Mammary epithelial cell (primary cell): ENCODE measurements at regions of chrX and their contacts with region 1.

Region 1: DNA sequence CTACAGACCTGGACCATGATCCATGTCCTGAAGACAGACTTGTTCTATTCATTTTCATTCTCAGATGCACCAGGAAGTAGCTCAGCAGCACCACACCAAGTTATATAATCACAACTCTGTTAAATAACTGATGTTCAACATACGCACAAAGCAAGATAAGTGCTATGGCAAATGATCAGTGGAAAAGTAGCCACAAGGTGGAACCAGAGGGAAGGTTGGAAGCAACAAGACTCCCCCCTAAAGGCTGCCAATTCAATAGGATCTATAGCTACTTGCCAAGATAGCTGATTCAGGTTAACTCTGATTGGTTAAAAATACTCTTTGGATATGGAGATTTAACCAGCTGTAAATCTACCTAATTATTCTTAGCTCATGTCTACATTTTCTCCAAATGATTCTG is 23.7 kb upstream of the FAM47B start:
- DNase-seq: peak; percentile 39
- H3K4me3 ChIP-seq: no peak overlapping the region
- H3K27ac ChIP-seq: no peak overlapping the region
- H3K4me1 ChIP-seq: peaks cover 12% of the 10 kb centered on the region
- H3K27me3 ChIP-seq: peaks cover 2% of the 10 kb centered on the region
- CTCF ChIP-seq: peak; percentile 48 to 59

Region 2: DNA sequence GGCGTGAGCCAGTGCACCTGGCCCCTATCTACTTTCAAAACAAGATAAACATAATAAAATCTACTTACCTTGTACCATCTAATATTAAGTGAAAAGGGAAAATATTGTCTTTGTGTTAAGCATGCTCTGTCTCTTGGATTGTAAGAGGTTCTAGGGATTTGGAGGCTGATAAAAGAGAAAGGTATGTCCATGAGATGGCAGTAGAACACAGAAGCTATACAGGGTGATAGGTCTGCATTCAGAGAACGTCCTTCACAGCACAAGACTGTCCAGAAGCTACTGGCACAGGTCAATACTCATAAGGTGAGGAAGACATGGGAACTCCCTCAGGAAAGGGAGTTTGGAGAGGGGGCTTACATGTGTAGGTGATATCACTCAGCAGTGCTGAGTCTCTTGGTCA is 397.3 kb before region 1 on chrX:
- CTCF ChIA-PET with region 1: no interaction called
- dilution Hi-C with region 1: no loop called
- in situ Hi-C with region 1: no loop called
- intact Hi-C with region 1: loop called (anchors 10 kb)
- DNase-seq: peak; percentile 21
- H3K4me3 ChIP-seq: no peak overlapping the region
- H3K27ac ChIP-seq: no peak overlapping the region
- H3K4me1 ChIP-seq: no peaks in the 10 kb centered on the region
- H3K27me3 ChIP-seq: no peaks in the 10 kb centered on the region
- CTCF ChIP-seq: peak; percentile 31 to 54

Region 3: DNA sequence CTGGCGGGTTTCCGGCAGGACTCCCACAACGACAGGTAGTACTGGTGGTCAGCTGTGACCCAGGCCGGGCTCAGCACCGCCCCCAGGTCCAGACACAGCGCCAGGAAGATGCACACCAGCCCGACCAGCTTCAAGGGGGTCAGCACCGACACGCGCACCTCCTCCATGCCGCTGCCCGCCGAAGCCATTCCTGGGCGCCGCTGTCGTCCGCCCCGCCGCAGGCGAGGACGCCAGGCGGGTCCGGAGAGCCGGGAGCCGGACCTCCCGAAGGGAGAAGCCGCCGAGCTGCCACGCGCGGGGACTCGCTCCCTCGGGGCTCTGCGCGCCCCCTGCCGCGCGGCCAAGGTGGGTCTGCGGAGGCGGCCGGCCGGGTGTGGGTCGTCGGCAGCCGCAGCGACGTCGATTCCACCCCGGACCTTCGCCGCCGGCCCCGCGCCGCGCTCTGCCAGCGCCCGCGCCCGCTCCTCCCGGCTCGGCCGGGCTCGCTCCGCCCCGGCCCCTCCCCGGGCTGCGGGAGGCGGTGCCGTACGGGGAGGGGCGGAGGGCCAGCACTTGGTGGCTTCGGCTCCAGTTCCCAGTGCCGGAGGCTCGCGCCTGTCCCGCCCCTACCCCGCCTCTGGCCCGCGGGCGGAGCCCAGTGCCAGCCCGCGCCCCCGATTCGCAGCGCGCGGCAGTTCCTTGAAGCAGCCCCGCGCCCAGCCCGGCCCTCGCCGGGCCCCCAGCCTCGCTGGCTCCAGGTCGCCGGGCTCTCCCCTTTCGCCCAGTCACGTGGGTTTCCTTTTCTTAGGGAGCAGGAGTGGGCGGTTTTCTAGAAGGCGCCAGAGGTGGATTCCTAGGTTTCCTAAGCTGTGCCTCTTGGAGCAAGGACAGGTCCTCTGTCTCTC is 261.8 kb before region 1 on chrX and contains the start of gene TMEM47:
- CTCF ChIA-PET with region 1: no interaction called
- dilution Hi-C with region 1: no loop called
- in situ Hi-C with region 1: no loop called
- intact Hi-C with region 1: loop called (anchors 10 kb)
- DNase-seq: peak; percentile 69
- H3K4me3 ChIP-seq: peak within 1 kb of the TSS; percentile 49 to 68 (median 61)
- H3K27ac ChIP-seq: peak within 1 kb of the TSS; percentile 62
- H3K4me1 ChIP-seq: no peaks in the 10 kb centered on the region
- H3K27me3 ChIP-seq: peaks cover 8% of the 10 kb centered on the region
- CTCF ChIP-seq: no peak
- total RNA-seq, gene TMEM47: 11.9 to 28.0 TPM

Region 4: DNA sequence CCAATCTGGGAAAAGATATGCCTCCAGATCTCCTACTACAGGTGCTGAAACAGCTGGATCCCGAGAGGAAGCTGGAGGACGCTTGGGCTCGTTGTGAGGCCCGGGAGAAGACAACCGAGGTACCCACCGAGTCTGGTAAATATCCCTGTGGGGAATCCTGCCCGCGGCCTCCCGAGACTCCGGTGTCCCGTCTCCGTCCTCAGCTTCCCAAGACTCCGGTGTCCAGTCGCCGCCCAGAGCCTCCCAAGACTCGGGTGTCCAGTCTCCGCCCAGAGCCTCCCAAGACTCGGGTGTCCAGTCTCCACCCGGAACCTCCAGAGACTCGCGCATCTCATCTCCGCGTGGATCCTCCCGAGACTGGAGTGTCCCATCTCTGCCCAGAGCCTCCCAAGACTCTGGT is 24.4 kb after region 1 on chrX:
- CTCF ChIA-PET with region 1: no interaction called
- dilution Hi-C with region 1: no loop called
- in situ Hi-C with region 1: no loop called
- intact Hi-C with region 1: no loop called
- DNase-seq: no peak
- H3K4me3 ChIP-seq: no peak overlapping the region
- H3K27ac ChIP-seq: no peak overlapping the region
- H3K4me1 ChIP-seq: no peaks in the 10 kb centered on the region
- H3K27me3 ChIP-seq: peaks cover 2% of the 10 kb centered on the region
- CTCF ChIP-seq: no peak

Region 5: GRCh38 chrX:35098419-35098818 is 179.6 kb after region 1 on chrX:
- CTCF ChIA-PET with region 1: no interaction called
- dilution Hi-C with region 1: no loop called
- in situ Hi-C with region 1: no loop called
- intact Hi-C with region 1: loop called (anchors 2 kb)
- DNase-seq: no peak
- H3K4me3 ChIP-seq: no peak overlapping the region
- H3K27ac ChIP-seq: no peak overlapping the region
- H3K4me1 ChIP-seq: no peaks in the 10 kb centered on the region
- H3K27me3 ChIP-seq: no peaks in the 10 kb centered on the region
- CTCF ChIP-seq: peak; percentile 14 to 38

Region 6: GRCh38 chrX:35726176-35726575 is 807.3 kb after region 1 on chrX:
- CTCF ChIA-PET with region 1: no interaction called
- dilution Hi-C with region 1: no loop called
- in situ Hi-C with region 1: no loop called
- intact Hi-C with region 1: loop called (anchors 10 kb)
- DNase-seq: peak; percentile 9
- H3K4me3 ChIP-seq: no peak overlapping the region
- H3K27ac ChIP-seq: no peak overlapping the region
- H3K4me1 ChIP-seq: no peaks in the 10 kb centered on the region
- H3K27me3 ChIP-seq: peaks cover 2% of the 10 kb centered on the region
- CTCF ChIP-seq: peak; percentile 35 to 54